ENCODE measurements at regions of chr2 and their contacts with region 1.

Region 1: GRCh38 chr2:158686210-158686691 is 108.9 kb upstream of the DAPL1 start:
- DNase-seq: no peak
- H3K4me3 ChIP-seq: no peak overlapping the region
- H3K27ac ChIP-seq: no peak overlapping the region
- H3K4me1 ChIP-seq: no peaks in the 10 kb centered on the region; a peak in 2 of 7 replicates
- H3K27me3 ChIP-seq: no peaks in the 10 kb centered on the region
- CTCF ChIP-seq: no peak
- EP300 ChIP-seq: no peak
- POLR2A ChIP-seq: no peak
- RAD21 ChIP-seq: no peak

Region 2: DNA sequence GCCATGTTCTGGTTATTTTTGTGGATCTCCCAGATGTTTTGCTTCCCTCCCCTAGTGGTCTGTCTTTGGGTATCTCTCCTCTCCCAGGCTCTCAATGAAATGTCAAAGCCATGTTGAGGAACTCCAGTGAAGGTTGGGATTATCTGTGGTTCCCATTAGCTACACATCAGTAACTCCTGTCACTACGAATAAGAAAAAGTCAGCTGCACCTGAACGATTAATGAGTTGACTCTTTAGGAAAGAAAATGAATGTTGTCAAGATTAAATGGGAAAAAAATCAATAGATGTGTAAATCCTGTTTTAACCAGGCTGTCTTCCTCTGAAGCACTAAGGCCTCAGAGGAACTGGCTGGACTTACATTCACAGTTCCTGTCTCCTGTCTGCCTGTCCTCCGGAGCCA is 14.8 kb after region 1 on chr2:
- CTCF ChIA-PET with region 1: interaction called, 10 read pairs
- POLR2A ChIA-PET with region 1: no interaction called
- DNase-seq: no peak
- H3K4me3 ChIP-seq: no peak overlapping the region
- H3K27ac ChIP-seq: no peak overlapping the region
- H3K4me1 ChIP-seq: no peaks in the 10 kb centered on the region
- H3K27me3 ChIP-seq: no peaks in the 10 kb centered on the region
- CTCF ChIP-seq: no peak
- EP300 ChIP-seq: no peak
- POLR2A ChIP-seq: no peak
- RAD21 ChIP-seq: no peak

Region 3: DNA sequence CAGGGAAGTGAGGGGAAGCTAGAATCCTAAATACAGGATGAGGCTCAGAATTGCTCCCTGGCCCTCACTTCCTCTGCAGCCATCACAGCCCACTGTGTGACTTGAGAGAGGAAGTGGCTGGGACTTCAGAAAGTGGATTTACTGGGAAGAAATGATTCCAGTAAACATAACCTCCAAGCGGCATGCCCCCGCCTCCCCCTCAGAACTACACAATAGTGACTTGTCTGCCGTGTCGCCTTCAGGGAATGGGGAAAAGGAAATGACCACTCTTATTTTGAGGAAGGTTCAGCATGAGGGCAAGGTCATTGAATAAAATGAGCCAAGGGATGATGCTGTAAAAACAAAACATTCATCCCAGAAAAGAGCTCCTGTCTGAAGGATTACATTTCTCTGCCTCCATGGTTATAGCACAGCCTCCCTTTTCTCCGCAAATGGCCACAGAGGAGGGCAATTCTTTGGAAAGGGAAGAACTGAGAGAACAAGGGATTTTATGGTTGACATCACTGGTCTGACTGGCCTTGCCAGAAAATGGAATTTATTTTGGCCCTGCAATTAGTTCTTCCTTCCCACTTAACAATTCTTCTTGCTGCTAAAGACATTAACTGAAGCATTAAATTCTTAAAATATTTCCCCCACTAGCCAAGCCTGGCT is 30.0 kb after region 1 on chr2:
- CTCF ChIA-PET with region 1: no interaction called
- POLR2A ChIA-PET with region 1: no interaction called
- DNase-seq: no peak
- H3K4me3 ChIP-seq: no peak overlapping the region
- H3K27ac ChIP-seq: no peak overlapping the region
- H3K4me1 ChIP-seq: no peaks in the 10 kb centered on the region
- H3K27me3 ChIP-seq: no peaks in the 10 kb centered on the region
- CTCF ChIP-seq: no peak
- EP300 ChIP-seq: no peak
- POLR2A ChIP-seq: no peak
- RAD21 ChIP-seq: no peak

Region 4: DNA sequence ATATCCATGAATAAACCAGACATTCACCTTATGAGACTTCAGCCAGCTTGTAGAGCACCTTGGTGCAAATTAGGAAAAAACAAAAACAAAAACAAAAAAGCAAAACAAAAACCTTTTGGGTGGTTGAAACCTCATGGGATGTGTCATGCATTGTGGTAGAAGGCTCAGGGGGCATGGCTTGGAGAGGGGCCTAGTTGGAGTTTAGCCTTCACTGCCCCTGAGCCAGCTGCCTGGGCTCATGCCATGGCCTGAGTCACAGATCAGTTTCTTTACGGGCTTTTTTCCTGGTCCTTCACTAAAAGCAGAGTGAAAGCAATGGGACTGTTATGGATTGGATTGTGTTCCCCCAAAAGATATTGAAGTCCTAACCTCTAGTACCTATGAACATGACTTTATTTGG is 86.9 kb after region 1 on chr2:
- CTCF ChIA-PET with region 1: no interaction called
- POLR2A ChIA-PET with region 1: no interaction called
- DNase-seq: no peak
- H3K4me3 ChIP-seq: no peak overlapping the region
- H3K27ac ChIP-seq: no peak overlapping the region
- H3K4me1 ChIP-seq: peaks cover 0 to 5% (median under 1%) of the 10 kb centered on the region in 4 experiments; a peak in 4 of 7 replicates
- H3K27me3 ChIP-seq: no peaks in the 10 kb centered on the region
- CTCF ChIP-seq: no peak
- EP300 ChIP-seq: no peak
- POLR2A ChIP-seq: no peak
- RAD21 ChIP-seq: no peak

Measured in H1 (cell line).